Activated CD8-positive, alpha-beta memory T cell treated with anti-CD3 and anti-CD28 coated beads, Interleukin-2, amount 10 ng/mL, durations not matched to agents 7 days and 5 days (primary cell): ENCODE measurements at regions of chr15 and their contacts with region 1.

Region 1: GRCh38 chr15:72227192-72227586 is 3.8 kb downstream of the PKM start:
- DNase-seq: peak; percentile 72
- ATAC-seq: peak; percentile 28
- H3K4me3 Mint-ChIP-seq: peak overlapping the region; percentile 99
- H3K27ac Mint-ChIP-seq: peak overlapping the region; percentile 92
- H3K4me1 Mint-ChIP-seq: peaks cover 59% of the 10 kb centered on the region
- H3K27me3 Mint-ChIP-seq: no peaks in the 10 kb centered on the region

Region 2: DNA sequence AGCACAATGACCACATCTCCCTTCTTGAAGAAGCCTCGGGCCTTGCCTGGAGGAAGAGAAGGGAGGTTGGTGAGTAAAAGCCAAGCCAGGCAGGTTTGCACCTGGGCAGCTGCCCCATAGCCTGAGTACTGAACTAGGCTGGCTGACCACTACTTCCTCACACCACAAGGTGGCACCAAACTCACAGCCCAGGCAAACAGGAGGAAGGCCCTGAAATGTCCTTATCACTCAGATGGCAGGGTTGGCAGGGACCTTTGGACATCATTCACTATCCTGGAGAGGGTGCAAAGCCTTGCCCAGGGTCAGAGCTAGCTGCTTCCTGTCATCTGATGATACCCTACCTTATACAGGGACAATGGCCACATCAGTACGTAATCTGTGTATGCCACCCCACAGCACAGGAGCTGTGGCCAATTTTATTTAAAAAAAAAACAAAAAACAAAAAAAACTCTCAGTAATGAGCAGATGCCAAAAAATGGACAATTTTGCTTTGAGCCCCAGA is 27.4 kb before region 1 on chr15:
- CTCF ChIA-PET with region 1: interaction called, 37 read pairs
- DNase-seq: peak; percentile 83
- ATAC-seq: peak; percentile 63
- H3K4me3 Mint-ChIP-seq: no peak overlapping the region
- H3K27ac Mint-ChIP-seq: no peak overlapping the region
- H3K4me1 Mint-ChIP-seq: peaks cover 12% of the 10 kb centered on the region
- H3K27me3 Mint-ChIP-seq: peaks cover 13% of the 10 kb centered on the region

Region 3: DNA sequence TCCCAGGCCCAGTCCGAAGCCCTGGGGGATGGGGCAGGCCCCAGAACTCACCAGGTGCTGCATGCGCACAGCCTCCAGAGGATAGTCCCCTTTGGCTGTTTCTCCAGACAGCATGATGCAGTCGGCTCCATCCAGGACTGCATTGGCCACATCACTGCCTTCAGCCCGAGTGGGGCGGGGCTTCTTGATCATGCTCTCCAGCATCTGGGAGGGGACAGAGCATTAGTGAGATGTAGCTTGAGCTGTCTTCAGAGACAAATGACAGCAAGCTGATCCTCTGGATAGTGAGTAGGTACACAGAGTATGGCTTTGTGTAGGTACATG is 20.6 kb before region 1 on chr15:
- CTCF ChIA-PET with region 1: interaction called, 37 read pairs
- DNase-seq: no peak
- ATAC-seq: no peak
- H3K4me3 Mint-ChIP-seq: no peak overlapping the region
- H3K27ac Mint-ChIP-seq: no peak overlapping the region
- H3K4me1 Mint-ChIP-seq: peaks cover 14% of the 10 kb centered on the region
- H3K27me3 Mint-ChIP-seq: no peaks in the 10 kb centered on the region

Region 4: DNA sequence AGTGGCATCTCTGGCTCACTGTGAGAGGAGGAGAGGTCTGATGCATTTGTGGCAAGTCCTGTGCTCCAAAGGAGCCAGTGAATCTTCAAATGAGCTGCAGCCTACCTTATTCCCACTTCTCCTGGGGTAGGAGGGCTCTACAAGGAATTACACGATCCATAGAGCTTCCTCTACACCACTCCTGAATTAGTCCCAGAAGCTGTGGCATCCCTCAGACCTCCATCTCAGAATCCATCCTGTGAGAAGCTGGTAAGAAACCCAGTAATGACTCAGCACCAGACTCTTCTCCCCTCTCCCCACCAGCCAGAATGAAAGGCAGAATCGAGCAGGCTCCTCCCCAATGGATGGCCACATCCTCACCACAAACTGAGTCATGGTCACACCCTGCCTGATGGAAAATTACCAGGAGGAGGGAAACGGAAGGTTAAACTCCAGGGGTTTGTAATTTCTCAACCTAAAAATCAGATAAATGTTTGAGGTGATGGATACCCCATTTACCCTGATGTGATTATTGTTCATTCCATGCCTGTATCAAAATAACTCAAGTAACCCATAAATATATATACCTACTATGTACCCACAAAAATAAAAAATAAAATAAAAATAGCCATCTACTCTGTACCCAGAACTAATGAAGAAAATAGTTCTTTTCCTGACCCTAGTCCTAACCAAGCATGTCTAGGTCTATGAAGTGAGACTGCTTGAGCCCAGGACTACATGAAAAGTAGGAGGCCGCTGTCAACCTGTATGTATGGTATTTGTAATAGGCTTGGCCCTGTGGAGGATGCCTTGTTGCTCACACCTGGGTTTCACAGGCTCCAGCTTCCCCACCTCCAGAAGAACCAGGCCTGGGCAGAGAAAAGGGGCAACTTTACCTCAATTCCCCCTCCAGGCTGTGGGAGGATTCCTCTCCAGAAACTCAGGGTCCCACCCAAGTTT is 10.4 kb after region 1 on chr15:
- CTCF ChIA-PET with region 1: interaction called, 57 read pairs
- DNase-seq: peak; percentile 91
- ATAC-seq: peak; percentile 92
- H3K4me3 Mint-ChIP-seq: peak overlapping the region; percentile 33
- H3K27ac Mint-ChIP-seq: peak overlapping the region; percentile 84
- H3K4me1 Mint-ChIP-seq: peaks cover 29% of the 10 kb centered on the region
- H3K27me3 Mint-ChIP-seq: no peaks in the 10 kb centered on the region

Region 5: DNA sequence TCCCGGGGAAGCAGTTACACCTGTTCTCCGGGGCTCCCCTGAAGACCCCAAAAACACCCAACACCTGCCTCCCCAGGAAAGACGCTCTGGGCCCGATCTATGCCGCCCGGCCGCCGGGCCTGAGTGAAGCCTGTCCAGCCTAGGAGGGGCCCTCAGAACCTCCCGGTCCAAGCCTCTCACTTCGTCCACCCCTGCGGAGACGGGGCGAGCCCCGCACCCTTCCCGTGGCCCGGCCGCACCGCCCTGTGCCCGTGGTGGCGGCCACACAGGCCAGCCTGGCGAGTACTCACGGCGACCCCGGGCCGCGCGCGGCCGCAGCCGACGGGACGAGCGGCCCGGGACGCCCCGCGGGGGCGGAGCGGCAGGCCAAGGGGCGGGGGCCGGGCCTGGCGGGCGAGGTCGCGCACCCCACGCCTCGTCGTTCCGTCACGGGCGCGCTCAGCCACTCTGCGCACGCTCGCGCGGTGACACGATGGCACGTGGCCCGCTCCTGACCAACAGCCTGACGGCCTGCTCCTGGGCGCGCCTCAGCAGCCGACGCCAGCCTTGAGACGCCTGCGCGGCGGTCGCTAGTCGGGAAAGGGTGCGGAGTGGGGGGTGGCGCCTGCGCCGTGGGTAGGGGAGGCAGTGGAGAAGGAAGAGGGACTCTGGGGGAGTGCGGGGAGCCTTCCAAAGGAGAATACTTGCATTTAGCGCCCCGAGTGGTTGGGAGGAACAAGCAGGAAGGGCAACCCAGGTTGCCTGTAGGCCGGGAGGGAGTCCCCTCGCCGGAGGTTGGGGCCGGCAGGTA is 45.2 kb after region 1 on chr15 and contains the start of gene PARP6:
- CTCF ChIA-PET with region 1: interaction called, 10 read pairs
- DNase-seq: peak; percentile 98
- ATAC-seq: peak; percentile 99
- H3K4me3 Mint-ChIP-seq: peak within 1 kb of the TSS; percentile 82
- H3K27ac Mint-ChIP-seq: peak within 1 kb of the TSS; percentile 87
- H3K4me1 Mint-ChIP-seq: peaks cover 28% of the 10 kb centered on the region
- H3K27me3 Mint-ChIP-seq: no peaks in the 10 kb centered on the region
- total RNA-seq, gene PARP6: 55.5 to 66.6 TPM